CD4-positive, alpha-beta memory T cell (primary cell): ENCODE measurements at regions of chr16 and their contacts with region 1.

Region 1: DNA sequence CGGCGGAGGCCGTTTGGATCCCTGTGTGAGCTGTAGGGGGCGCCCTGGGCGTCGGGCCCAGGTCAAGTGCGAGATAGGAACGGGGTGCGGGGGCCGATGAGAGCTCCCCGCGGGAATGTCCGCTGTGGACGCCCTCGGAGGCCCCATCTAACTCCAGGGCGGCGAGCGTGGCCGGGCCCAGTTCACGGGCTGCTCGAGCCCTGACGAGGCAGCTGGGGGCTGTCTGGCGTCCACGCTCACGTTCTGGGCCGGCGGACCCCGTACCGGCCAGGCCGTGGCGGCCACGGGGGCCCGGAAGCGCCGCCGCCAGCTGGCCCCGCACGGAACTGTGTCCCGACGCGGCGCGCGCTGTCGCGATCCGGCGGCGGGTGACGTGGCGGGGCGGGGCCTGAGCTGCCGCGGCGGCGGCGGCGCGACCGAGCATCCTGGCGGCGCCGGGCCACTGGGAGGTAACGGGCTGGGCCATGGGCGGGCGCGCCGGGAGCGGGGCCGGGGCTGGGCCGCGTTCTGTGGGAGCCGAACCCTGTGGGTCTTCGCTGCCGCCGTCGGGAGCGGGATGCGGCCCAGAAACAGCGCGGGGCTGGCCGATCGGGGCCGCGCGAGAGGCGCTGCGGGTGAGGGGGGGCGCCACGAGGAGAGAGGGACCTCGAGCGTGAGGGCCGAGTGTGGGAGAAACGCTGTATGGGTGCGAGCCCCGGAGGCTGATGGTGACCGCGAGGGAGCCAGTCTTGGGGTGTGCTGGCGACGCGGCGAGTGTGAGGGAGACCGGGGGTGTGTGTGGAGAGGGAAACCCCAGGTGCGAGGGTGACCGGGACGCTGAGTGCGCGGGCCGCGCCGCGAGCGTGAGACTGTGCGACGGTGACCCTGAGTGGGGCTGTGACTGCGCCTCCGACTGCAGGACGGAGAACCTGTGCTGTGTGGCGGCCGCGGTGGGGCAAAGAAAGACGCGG is at the start of gene SLC7A6:
- DNase-seq: peak; percentile 79 to 86 (median 85)
- H3K4me3 ChIP-seq: peak within 1 kb of the TSS; percentile 68 to 93
- H3K4me3 Mint-ChIP-seq: peak within 1 kb of the TSS; percentile 94 to 99 (median 97)
- H3K27ac ChIP-seq: peak within 1 kb of the TSS; percentile 97
- H3K27ac Mint-ChIP-seq: peak within 1 kb of the TSS; percentile 98 to 100 (median 99)
- H3K4me1 ChIP-seq: peaks cover 58% of the 10 kb centered on the region
- H3K4me1 Mint-ChIP-seq: peaks cover 30 to 67% (median 50%) of the 10 kb centered on the region in 4 donors
- H3K27me3 ChIP-seq: no peaks in the 10 kb centered on the region
- H3K27me3 Mint-ChIP-seq: no peaks in the 10 kb centered on the region
- total RNA-seq, gene SLC7A6: 190 to 194 TPM

Region 2: DNA sequence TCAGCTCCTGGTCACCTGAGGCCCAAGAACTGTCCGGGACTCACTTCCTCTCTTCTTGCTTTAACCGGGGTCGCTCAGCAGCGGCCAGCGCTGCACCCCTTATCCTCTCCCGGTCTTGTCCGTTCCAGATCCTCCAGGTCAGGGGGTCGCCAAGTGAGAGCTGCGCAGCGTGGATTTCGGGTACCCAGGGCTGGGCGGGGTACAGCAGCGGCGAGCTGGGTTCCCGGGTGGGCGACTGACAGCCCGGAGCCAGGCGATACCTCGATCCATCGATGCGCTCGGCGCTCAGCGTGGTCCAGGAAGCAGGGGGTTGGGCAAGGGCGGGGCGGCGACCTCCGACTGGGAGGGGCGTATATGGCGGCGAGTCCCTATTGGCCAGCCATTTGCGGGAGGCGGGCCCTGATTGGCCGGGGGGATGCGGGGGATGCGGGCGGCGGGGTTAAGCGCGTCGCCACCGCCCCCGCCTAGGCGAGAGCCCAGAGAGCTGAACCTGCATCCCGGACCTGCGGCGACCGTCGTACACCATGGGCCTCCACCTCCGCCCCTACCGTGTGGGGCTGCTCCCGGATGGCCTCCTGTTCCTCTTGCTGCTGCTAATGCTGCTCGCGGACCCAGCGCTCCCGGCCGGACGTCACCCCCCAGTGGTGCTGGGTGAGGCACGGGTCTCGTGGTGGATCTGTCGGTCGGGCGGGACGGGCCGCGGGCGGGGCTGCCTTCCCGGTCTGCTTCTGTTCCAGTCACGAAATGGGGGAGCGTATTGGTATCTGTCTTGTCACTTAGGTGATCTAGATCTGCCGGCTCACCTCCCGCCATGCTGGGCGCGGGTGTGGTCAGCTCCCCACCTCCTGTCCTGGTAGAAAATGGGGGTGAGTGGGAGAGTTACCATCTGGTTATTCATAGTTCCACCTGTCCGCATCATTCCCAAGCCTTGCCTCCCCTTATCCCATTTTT is 19.2 kb before region 1 on chr16 and contains the start of gene PLA2G15:
- CTCF ChIA-PET with region 1: interaction called, 34 read pairs
- POLR2A ChIA-PET with region 1: interaction called, 30 read pairs
- intact Hi-C with region 1: loop called (anchors 1 kb)
- DNase-seq: peak; percentile 93 to 96 (median 94)
- H3K4me3 ChIP-seq: peak within 1 kb of the TSS; percentile 91 to 98
- H3K4me3 Mint-ChIP-seq: peak within 1 kb of the TSS; percentile 93 to 99 (median 98)
- H3K27ac ChIP-seq: peak within 1 kb of the TSS; percentile 58
- H3K27ac Mint-ChIP-seq: peak within 1 kb of the TSS; percentile 77 to 95 (median 93)
- H3K4me1 ChIP-seq: peaks cover 27% of the 10 kb centered on the region
- H3K4me1 Mint-ChIP-seq: peaks cover 15 to 31% (median 20%) of the 10 kb centered on the region in 4 donors
- H3K27me3 ChIP-seq: no peaks in the 10 kb centered on the region
- H3K27me3 Mint-ChIP-seq: no peaks in the 10 kb centered on the region
- total RNA-seq, gene PLA2G15: 12.0 to 13.3 TPM

Region 3: GRCh38 chr16:68275611-68276191 is 11.3 kb after region 1 on chr16:
- CTCF ChIA-PET with region 1: interaction called, 680 read pairs
- POLR2A ChIA-PET with region 1: interaction called, 1,508 read pairs
- intact Hi-C with region 1: loop called (anchors 1 kb)
- DNase-seq: peak; percentile 72 to 83 (median 76)
- H3K4me3 ChIP-seq: peak overlapping the region in 1 of 2 donors; percentile 24
- H3K4me3 Mint-ChIP-seq: peak overlapping the region; percentile 74 to 86 (median 79)
- H3K27ac ChIP-seq: peak overlapping the region; percentile 50
- H3K27ac Mint-ChIP-seq: peak overlapping the region; percentile 84 to 97 (median 94)
- H3K4me1 ChIP-seq: peaks cover 81% of the 10 kb centered on the region
- H3K4me1 Mint-ChIP-seq: peaks cover 46 to 81% (median 66%) of the 10 kb centered on the region in 4 donors
- H3K27me3 ChIP-seq: no peaks in the 10 kb centered on the region
- H3K27me3 Mint-ChIP-seq: no peaks in the 10 kb centered on the region

Region 4: GRCh38 chr16:68289621-68290329 is 25.4 kb after region 1 on chr16:
- CTCF ChIA-PET with region 1: interaction called, 680 read pairs
- POLR2A ChIA-PET with region 1: interaction called, 1,508 read pairs
- intact Hi-C with region 1: loop called (anchors 1 kb)
- DNase-seq: peak; percentile 41 to 72 (median 56)
- H3K4me3 ChIP-seq: peak overlapping the region in 1 of 2 donors; percentile 4
- H3K4me3 Mint-ChIP-seq: peak overlapping the region; percentile 32 to 83 (median 66)
- H3K27ac ChIP-seq: peak overlapping the region; percentile 52
- H3K27ac Mint-ChIP-seq: peak overlapping the region; percentile 82 to 91 (median 89)
- H3K4me1 ChIP-seq: peaks cover 83% of the 10 kb centered on the region
- H3K4me1 Mint-ChIP-seq: peaks cover 63 to 92% (median 80%) of the 10 kb centered on the region in 4 donors
- H3K27me3 ChIP-seq: no peaks in the 10 kb centered on the region
- H3K27me3 Mint-ChIP-seq: no peaks in the 10 kb centered on the region

Region 5: DNA sequence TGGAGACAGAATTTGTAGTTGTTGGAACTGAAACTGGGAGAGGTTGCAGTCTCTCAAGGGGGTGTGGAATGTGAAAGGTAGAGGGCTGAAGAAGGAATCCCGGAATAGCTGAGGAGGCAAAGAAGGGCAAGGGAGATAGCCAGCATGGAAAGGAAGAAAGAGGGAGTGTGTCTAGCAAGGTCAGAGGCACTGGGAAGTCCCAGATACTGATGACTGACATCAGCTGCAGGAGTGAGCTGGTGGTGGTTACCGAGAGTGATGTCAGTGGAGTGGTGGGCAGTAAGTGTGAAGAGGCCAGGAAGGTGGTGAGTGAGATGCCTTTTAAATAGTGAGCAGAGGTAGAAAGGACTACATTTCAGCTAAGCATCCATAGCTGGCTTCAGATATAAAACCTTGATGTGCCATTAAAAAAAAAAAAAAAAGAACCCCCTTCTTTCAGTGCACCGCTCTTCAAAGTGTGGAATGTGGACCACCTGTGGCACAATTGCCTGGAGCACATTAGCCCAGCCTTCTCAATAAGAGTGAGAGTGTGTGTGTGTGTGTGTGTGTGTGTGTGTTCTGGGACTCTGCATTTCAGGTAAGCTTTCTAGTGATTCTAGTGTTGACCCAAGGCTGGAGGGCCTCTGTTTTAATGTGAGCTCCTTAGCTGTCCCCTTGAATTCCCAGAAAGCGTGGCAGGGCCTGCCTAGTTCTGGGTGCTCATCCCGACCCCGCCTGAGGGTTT is 54.9 kb after region 1 on chr16:
- CTCF ChIA-PET with region 1: interaction called, 575 read pairs
- POLR2A ChIA-PET with region 1: interaction called, 7 read pairs
- intact Hi-C with region 1: no loop called
- DNase-seq: no peak
- H3K4me3 ChIP-seq: no peak overlapping the region
- H3K4me3 Mint-ChIP-seq: no peak overlapping the region
- H3K27ac ChIP-seq: no peak overlapping the region
- H3K27ac Mint-ChIP-seq: peak overlapping the region in 5 of 7 donors; percentile 21 to 87 (median 65)
- H3K4me1 ChIP-seq: no peaks in the 10 kb centered on the region
- H3K4me1 Mint-ChIP-seq: peaks cover 14 to 24% (median 19%) of the 10 kb centered on the region in 4 donors
- H3K27me3 ChIP-seq: no peaks in the 10 kb centered on the region
- H3K27me3 Mint-ChIP-seq: no peaks in the 10 kb centered on the region